ENCODE measurements at regions of chr16 and their contacts with region 1.

Region 1: DNA sequence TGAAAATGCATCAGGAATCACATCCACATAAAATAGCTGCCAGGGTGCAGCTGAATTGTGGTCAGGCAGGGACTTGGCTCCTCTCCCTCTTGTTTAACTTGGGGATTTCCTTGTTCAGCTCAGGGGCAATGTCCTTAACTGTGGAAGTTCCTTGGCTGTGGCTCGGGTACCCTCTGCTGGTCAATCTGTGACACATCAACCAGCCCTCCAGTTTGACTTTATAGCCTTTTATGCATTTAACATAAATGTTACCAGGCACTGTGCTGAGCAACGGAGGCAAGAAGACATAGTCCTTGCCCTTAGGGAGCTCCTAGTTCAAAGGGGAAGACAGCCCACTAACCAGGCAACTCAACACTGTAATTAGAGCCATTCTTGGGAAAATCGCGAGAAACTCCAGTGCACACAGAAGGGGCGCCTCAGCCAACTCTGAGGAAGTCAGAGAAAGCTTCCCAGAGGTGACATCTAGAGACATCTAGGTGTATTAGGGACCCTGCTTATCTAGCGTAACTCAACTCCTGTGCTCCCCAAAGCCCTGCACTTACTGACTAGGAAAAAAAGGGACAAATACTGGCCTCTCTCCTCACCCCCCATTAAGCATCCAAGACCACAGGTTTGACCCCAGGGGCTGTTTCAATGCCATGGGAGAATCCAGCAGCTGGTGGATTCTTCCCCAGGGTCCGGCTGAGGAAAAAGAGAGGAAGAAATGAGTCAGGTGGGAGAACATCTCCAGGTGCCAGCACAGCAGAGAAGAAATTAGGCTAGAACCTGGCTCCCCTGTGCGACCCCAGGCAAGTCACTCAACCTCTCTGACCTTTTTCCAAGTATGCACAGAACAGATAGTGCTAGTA is 17.3 kb upstream of the EEF2K start:
- DNase-seq: no peak
- H3K4me3 ChIP-seq: peak overlapping the region in 2 of 4 donors; percentile 73 to 76
- H3K27ac ChIP-seq: peak overlapping the region; percentile 96 to 99 (median 98)
- H3K4me1 ChIP-seq: peaks cover 19 to 46% (median 28%) of the 10 kb centered on the region in 3 donors
- H3K27me3 ChIP-seq: no peaks in the 10 kb centered on the region
- CTCF ChIP-seq: peak; percentile 75 to 86 (median 80)
- POLR2A ChIP-seq: no peak

Region 2: DNA sequence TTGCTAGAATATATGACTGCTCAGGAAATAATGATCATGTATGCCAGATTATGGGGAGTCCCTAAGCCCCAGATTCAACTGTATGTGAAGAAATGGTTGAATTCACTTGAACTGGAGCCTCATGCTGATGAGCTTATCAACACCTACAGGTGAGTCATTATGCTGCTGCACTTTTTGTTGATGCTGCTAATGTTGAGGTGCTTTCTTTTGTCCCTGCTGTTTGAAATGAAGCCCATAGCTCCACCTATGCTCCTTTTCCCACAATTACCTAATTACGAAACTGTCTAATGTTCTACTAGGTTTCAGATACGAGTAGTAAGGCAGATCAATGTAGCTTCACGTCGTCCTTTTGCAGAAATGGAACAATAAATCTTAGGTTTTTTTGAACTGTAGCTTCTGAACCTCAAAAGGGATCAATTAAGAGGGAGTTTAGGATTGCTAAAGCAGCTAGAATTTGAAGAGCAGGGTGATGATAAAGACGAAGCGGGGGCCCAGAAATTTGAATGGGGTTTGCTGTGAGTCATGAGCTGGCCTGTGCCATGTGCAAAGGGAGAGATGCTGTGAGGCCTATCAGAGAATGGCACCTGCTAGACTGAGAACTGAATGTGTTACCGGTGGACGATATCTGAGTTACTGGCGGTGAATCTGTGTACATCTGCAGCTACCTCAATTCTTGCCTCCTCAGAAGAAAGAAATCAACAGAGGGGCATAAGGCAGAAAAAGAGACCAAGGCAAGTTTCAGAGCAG is 241.8 kb before region 1 on chr16:
- intact Hi-C with region 1: loop called (anchors 5 kb)
- DNase-seq: no peak
- H3K4me3 ChIP-seq: no peak overlapping the region
- H3K27ac ChIP-seq: no peak overlapping the region
- H3K4me1 ChIP-seq: peaks cover 5 to 29% (median 10%) of the 10 kb centered on the region in 3 donors
- H3K27me3 ChIP-seq: no peaks in the 10 kb centered on the region
- CTCF ChIP-seq: no peak
- POLR2A ChIP-seq: no peak

Measured in esophagus squamous epithelium (tissue), 5 donors.